T-cell (primary cell): ENCODE measurements at regions of chr10 and their contacts with region 1.

Region 1: GRCh38 chr10:30359373-30360206 is 10.5 kb upstream of the MTPAP start:
- DNase-seq: peak in 33 of 35 experiments; percentile 14 to 73 (median 42)
- ATAC-seq: peak; percentile 68 to 85 (median 78)
- H3K4me3 ChIP-seq: no peak overlapping the region
- H3K4me3 Mint-ChIP-seq: no peak overlapping the region
- H3K27ac ChIP-seq: no peak overlapping the region
- H3K27ac Mint-ChIP-seq: no peak overlapping the region
- H3K4me1 ChIP-seq: peaks cover 0 to 6% of the 10 kb centered on the region in 2 experiments
- H3K4me1 Mint-ChIP-seq: peaks cover 2 to 7% (median 5%) of the 10 kb centered on the region in 3 donors
- H3K27me3 ChIP-seq: peaks cover 0 to 35% of the 10 kb centered on the region in 2 experiments
- H3K27me3 Mint-ChIP-seq: peaks cover 10 to 14% of the 10 kb centered on the region in 2 donors

Region 2: DNA sequence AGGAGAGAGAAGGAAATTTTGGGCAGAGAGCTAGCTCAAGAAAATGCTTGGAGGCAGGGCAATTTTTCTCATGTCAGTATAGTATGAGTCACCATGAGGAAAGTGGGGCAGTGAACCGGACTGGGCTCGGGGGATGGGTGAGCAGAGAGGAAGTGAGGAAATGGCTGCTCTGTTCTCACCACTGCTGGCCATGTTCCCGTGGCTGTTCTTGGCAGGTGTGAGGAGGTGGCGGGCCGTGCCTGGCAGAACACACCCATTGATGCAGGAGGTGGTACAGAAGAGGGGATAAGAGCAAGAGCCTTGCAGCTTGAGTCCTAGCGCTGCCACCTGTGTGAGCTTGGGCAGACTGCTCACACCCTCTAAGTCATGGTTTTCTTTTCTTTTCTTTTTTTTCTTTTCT is 1375.2 kb before region 1 on chr10:
- CTCF ChIA-PET with region 1: no interaction called
- POLR2A ChIA-PET with region 1: no interaction called
- DNase-seq: peak in 1 of 35 experiments; percentile 5
- ATAC-seq: peak in 1 of 4 experiments; percentile 34
- H3K4me3 ChIP-seq: no peak overlapping the region
- H3K4me3 Mint-ChIP-seq: no peak overlapping the region
- H3K27ac ChIP-seq: no peak overlapping the region
- H3K27ac Mint-ChIP-seq: no peak overlapping the region
- H3K4me1 ChIP-seq: no peaks in the 10 kb centered on the region
- H3K4me1 Mint-ChIP-seq: no peaks in the 10 kb centered on the region
- H3K27me3 ChIP-seq: peaks cover 0 to 2% of the 10 kb centered on the region in 2 experiments
- H3K27me3 Mint-ChIP-seq: peaks cover 5 to 7% of the 10 kb centered on the region in 2 donors

Region 3: GRCh38 chr10:30294479-30295240 is 64.9 kb before region 1 on chr10:
- CTCF ChIA-PET with region 1: interaction called in 1 of 2 experiments, 3 read pairs
- POLR2A ChIA-PET with region 1: interaction called in 1 of 2 experiments, 16 read pairs
- DNase-seq: no peak
- ATAC-seq: no peak
- H3K4me3 ChIP-seq: no peak overlapping the region
- H3K4me3 Mint-ChIP-seq: no peak overlapping the region
- H3K27ac ChIP-seq: no peak overlapping the region
- H3K27ac Mint-ChIP-seq: no peak overlapping the region
- H3K4me1 ChIP-seq: no peaks in the 10 kb centered on the region
- H3K4me1 Mint-ChIP-seq: no peaks in the 10 kb centered on the region
- H3K27me3 ChIP-seq: no peaks in the 10 kb centered on the region
- H3K27me3 Mint-ChIP-seq: peaks cover 3 to 4% of the 10 kb centered on the region in 2 donors

Region 4: GRCh38 chr10:30348378-30348776 is 11.2 kb before region 1 on chr10:
- CTCF ChIA-PET with region 1: interaction called, 5 to 19 read pairs
- POLR2A ChIA-PET with region 1: no interaction called
- DNase-seq: peak in 1 of 35 experiments; percentile 4
- ATAC-seq: peak; percentile 5 to 31 (median 20)
- H3K4me3 ChIP-seq: peak overlapping the region; percentile 94 to 98
- H3K4me3 Mint-ChIP-seq: peak overlapping the region; percentile 88 to 98 (median 98)
- H3K27ac ChIP-seq: peak overlapping the region; percentile 80
- H3K27ac Mint-ChIP-seq: peak overlapping the region; percentile 67 to 94
- H3K4me1 ChIP-seq: peaks cover 19 to 20% of the 10 kb centered on the region in 2 experiments
- H3K4me1 Mint-ChIP-seq: peaks cover 45 to 53% (median 53%) of the 10 kb centered on the region in 3 donors
- H3K27me3 ChIP-seq: no peaks in the 10 kb centered on the region
- H3K27me3 Mint-ChIP-seq: peaks cover 0 to 1% of the 10 kb centered on the region in 2 donors

Region 5: DNA sequence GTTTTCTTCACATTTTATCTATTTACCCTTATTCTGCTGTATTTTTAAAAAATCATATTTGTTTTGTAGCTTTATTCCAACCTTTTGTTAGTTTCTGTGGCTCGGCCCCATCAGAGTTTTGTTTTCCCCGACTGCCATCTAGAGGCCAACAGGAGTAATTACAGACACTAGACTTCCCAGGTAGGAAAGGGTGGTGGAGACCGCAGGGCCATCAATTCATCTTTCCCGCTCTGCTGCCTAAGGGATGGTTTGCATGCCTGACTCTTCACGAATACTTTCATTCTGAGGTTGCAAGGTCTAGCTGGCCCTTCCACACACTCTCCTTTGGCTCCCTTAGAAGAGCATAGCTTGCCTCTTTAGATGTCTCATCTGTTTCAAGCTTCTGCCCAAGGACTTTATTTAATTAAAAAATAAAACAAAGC is 231.7 kb after region 1 on chr10:
- CTCF ChIA-PET with region 1: interaction called in 1 of 2 experiments, 15 read pairs
- POLR2A ChIA-PET with region 1: no interaction called
- DNase-seq: peak in 31 of 35 experiments; percentile 1 to 80 (median 16)
- ATAC-seq: peak; percentile 50 to 67 (median 62)
- H3K4me3 ChIP-seq: no peak overlapping the region
- H3K4me3 Mint-ChIP-seq: no peak overlapping the region
- H3K27ac ChIP-seq: no peak overlapping the region
- H3K27ac Mint-ChIP-seq: no peak overlapping the region
- H3K4me1 ChIP-seq: no peaks in the 10 kb centered on the region
- H3K4me1 Mint-ChIP-seq: peaks cover 0 to 9% (median 2%) of the 10 kb centered on the region in 3 donors
- H3K27me3 ChIP-seq: peaks cover 0 to 25% of the 10 kb centered on the region in 2 experiments
- H3K27me3 Mint-ChIP-seq: peaks cover 11 to 16% of the 10 kb centered on the region in 2 donors

Region 6: GRCh38 chr10:30671026-30671616 is 311.5 kb after region 1 on chr10:
- CTCF ChIA-PET with region 1: no interaction called
- POLR2A ChIA-PET with region 1: no interaction called
- DNase-seq: peak in 14 of 35 experiments; percentile 4 to 80 (median 14)
- ATAC-seq: peak; percentile 61 to 73 (median 70)
- H3K4me3 ChIP-seq: no peak overlapping the region
- H3K4me3 Mint-ChIP-seq: peak overlapping the region; percentile 31 to 64 (median 54)
- H3K27ac ChIP-seq: no peak overlapping the region
- H3K27ac Mint-ChIP-seq: no peak overlapping the region
- H3K4me1 ChIP-seq: peaks cover 0 to 2% of the 10 kb centered on the region in 2 experiments
- H3K4me1 Mint-ChIP-seq: peaks cover 0 to 8% (median 4%) of the 10 kb centered on the region in 3 donors
- H3K27me3 ChIP-seq: peaks cover 0 to 18% of the 10 kb centered on the region in 2 experiments
- H3K27me3 Mint-ChIP-seq: peaks cover 6 to 11% of the 10 kb centered on the region in 2 donors